ENCODE measurements at regions of chr9 and their contacts with region 1.

Region 1: GRCh38 chr9:22898591-22898990 is 452.0 kb downstream of the DMRTA1 start:
- DNase-seq: no peak
- ATAC-seq: no peak
- H3K4me3 ChIP-seq: no peak overlapping the region
- H3K27ac ChIP-seq: no peak overlapping the region
- H3K4me1 ChIP-seq: no peaks in the 10 kb centered on the region
- H3K27me3 ChIP-seq: no peaks in the 10 kb centered on the region
- CTCF ChIP-seq: no peak

Region 2: GRCh38 chr9:21770877-21771560 is 1127.6 kb before region 1 on chr9:
- intact Hi-C with region 1: no loop called
- DNase-seq: no peak
- ATAC-seq: peak in 1 of 8 donors; percentile 33
- H3K4me3 ChIP-seq: no peak overlapping the region
- H3K27ac ChIP-seq: no peak overlapping the region
- H3K4me1 ChIP-seq: peaks cover 0 to 4% (median 0%) of the 10 kb centered on the region in 9 donors
- H3K27me3 ChIP-seq: peaks cover 0 to 19% (median 0%) of the 10 kb centered on the region in 7 donors
- CTCF ChIP-seq: no peak

Region 3: DNA sequence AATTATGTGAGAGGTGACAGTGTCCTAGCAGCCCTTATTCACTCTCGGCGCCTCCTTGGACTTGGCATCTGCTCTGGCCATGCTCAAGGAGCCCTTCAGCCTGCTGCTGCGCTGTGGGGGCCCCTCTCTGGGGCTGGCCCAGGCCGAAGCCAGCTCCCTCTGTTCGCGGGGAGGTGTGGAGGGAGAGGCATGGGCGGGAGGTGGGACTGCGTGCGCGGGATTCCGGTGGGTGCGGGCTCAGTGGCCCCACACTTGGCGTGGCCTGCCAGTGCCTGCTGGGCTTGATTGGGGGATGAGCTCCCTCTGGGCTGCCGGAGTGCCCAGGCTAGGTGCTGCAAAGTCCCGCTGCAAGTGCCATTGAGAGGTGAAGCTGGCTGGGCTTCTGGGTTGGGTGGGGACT is 464.9 kb before region 1 on chr9:
- intact Hi-C with region 1: no loop called
- DNase-seq: no peak
- ATAC-seq: no peak
- H3K4me3 ChIP-seq: no peak overlapping the region
- H3K27ac ChIP-seq: no peak overlapping the region
- H3K4me1 ChIP-seq: no peaks in the 10 kb centered on the region
- H3K27me3 ChIP-seq: peaks cover 0 to 4% (median 0%) of the 10 kb centered on the region in 7 donors
- CTCF ChIP-seq: no peak

Region 4: DNA sequence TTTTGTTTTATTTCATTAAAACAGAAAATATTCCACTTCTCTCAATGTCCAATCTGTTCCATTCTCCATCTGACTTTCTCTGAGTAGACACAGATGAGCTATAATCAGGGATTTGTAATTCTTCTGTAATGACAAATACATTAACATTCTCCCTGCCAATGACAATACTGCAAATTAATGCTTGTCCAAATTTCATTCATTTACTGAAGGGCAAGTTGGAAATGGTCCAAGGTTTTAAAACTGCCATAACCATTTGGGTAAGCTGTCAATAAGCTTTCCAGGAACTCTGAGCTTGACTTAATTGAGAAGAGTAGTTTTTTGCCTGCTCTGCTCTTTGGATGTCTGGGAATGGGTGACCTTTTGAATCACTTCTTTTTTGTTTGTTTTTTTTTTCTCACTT is 198.4 kb before region 1 on chr9:
- intact Hi-C with region 1: no loop called
- DNase-seq: no peak
- ATAC-seq: no peak
- H3K4me3 ChIP-seq: no peak overlapping the region
- H3K27ac ChIP-seq: no peak overlapping the region
- H3K4me1 ChIP-seq: no peaks in the 10 kb centered on the region
- H3K27me3 ChIP-seq: no peaks in the 10 kb centered on the region
- CTCF ChIP-seq: no peak

Region 5: DNA sequence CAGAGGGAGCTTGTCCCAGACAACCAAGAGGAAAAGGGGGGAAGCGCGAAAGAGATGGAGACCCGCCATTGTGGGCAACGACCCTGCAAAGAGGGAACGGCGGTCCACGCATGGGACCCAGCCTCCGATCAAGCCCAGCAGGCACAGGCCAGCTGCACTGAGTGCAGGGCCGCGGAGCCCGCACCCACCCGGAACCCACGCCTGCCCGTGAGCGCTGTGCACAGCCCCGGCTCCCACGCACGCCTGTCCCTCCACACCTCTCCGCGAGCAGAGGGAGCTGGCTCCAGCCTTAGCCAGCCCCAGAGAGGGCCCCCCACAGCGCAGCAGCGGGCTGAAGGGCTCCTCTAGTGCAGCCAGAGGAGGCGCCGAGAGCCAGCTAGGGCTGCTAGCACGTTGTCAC is 35.5 kb before region 1 on chr9:
- intact Hi-C with region 1: no loop called
- DNase-seq: no peak
- ATAC-seq: peak in 1 of 8 donors; percentile 55
- H3K4me3 ChIP-seq: no peak overlapping the region
- H3K27ac ChIP-seq: no peak overlapping the region
- H3K4me1 ChIP-seq: no peaks in the 10 kb centered on the region
- H3K27me3 ChIP-seq: no peaks in the 10 kb centered on the region
- CTCF ChIP-seq: no peak

Region 6: GRCh38 chr9:22954550-22954949 is 56.0 kb after region 1 on chr9:
- intact Hi-C with region 1: loop called in 1 of 10 experiments (anchors 5 kb)
- DNase-seq: no peak
- ATAC-seq: no peak
- H3K4me3 ChIP-seq: no peak overlapping the region
- H3K27ac ChIP-seq: no peak overlapping the region
- H3K4me1 ChIP-seq: no peaks in the 10 kb centered on the region
- H3K27me3 ChIP-seq: no peaks in the 10 kb centered on the region
- CTCF ChIP-seq: no peak

Measured in heart right ventricle (tissue), 16 donors.